ENCODE measurements at regions of chr4 and their contacts with region 1.

Region 1: GRCh38 chr4:164320847-164321246 is 433.1 kb upstream of the SMIM31 start:
- DNase-seq: no peak
- H3K4me3 ChIP-seq: no peak overlapping the region
- H3K27ac ChIP-seq: no peak overlapping the region
- H3K4me1 ChIP-seq: no peaks in the 10 kb centered on the region
- H3K27me3 ChIP-seq: no peaks in the 10 kb centered on the region
- CTCF ChIP-seq: no peak
- POLR2A ChIP-seq: no peak

Region 2: GRCh38 chr4:163161536-163162205 is 1159.2 kb before region 1 on chr4:
- intact Hi-C with region 1: no loop called
- DNase-seq: no peak
- H3K4me3 ChIP-seq: no peak overlapping the region
- H3K27ac ChIP-seq: no peak overlapping the region
- H3K4me1 ChIP-seq: peaks cover 30% of the 10 kb centered on the region
- H3K27me3 ChIP-seq: no peaks in the 10 kb centered on the region
- CTCF ChIP-seq: no peak
- POLR2A ChIP-seq: no peak

Region 3: GRCh38 chr4:164136180-164136616 is 184.6 kb before region 1 on chr4:
- intact Hi-C with region 1: no loop called
- DNase-seq: no peak
- H3K4me3 ChIP-seq: no peak overlapping the region
- H3K27ac ChIP-seq: no peak overlapping the region
- H3K4me1 ChIP-seq: no peaks in the 10 kb centered on the region
- H3K27me3 ChIP-seq: no peaks in the 10 kb centered on the region
- CTCF ChIP-seq: no peak
- POLR2A ChIP-seq: no peak

Region 4: DNA sequence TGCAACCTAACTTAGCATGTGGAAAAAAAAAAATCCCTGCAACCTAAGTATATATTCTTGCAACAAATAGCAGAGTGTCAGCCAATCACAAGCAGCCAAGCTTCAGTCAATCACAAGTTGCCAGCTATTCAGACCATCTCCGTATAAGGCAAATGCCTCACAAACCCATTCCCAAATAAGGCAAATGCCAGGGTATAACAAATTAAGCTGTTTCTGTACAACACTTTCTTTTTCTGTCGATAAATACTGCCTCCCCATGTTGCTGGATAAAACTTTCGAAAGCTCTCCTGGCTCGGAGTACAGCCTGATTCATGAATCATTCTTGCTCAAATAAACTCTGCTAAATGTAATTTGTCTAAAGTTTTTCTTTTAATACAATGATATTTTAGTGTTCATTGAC is 27.6 kb before region 1 on chr4:
- intact Hi-C with region 1: loop called (anchors 1 kb)
- DNase-seq: no peak
- H3K4me3 ChIP-seq: no peak overlapping the region
- H3K27ac ChIP-seq: no peak overlapping the region
- H3K4me1 ChIP-seq: no peaks in the 10 kb centered on the region
- H3K27me3 ChIP-seq: no peaks in the 10 kb centered on the region
- CTCF ChIP-seq: no peak
- POLR2A ChIP-seq: no peak

Region 5: DNA sequence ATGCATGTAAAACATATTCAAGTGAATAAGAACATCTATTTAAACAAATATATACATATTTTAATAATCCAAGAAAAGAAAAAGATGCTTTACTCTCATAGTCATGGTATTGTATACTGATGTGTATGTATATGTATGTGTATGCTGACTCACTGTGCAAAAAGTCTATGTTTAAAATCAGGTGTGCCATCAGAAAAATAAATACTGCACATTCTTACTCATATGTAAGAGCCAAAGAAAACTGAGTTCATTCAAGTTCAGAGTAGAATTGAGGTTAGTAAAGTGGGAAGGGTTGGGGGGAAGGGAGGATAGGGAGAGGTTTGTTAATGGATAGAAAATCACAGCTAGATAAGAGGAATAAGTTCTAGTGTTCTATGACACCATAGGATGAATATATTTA is 29.2 kb after region 1 on chr4:
- intact Hi-C with region 1: no loop called
- DNase-seq: no peak
- H3K4me3 ChIP-seq: no peak overlapping the region
- H3K27ac ChIP-seq: no peak overlapping the region
- H3K4me1 ChIP-seq: no peaks in the 10 kb centered on the region
- H3K27me3 ChIP-seq: no peaks in the 10 kb centered on the region
- CTCF ChIP-seq: no peak
- POLR2A ChIP-seq: no peak

Measured in vagina (tissue), 2 donors.